ACHN (cell line): ENCODE measurements at regions of chr17 and their contacts with region 1.

Region 1: GRCh38 chr17:63819585-63820537 is 7.4 kb upstream of the PSMC5 start:
- DNase-seq: no peak

Region 2: DNA sequence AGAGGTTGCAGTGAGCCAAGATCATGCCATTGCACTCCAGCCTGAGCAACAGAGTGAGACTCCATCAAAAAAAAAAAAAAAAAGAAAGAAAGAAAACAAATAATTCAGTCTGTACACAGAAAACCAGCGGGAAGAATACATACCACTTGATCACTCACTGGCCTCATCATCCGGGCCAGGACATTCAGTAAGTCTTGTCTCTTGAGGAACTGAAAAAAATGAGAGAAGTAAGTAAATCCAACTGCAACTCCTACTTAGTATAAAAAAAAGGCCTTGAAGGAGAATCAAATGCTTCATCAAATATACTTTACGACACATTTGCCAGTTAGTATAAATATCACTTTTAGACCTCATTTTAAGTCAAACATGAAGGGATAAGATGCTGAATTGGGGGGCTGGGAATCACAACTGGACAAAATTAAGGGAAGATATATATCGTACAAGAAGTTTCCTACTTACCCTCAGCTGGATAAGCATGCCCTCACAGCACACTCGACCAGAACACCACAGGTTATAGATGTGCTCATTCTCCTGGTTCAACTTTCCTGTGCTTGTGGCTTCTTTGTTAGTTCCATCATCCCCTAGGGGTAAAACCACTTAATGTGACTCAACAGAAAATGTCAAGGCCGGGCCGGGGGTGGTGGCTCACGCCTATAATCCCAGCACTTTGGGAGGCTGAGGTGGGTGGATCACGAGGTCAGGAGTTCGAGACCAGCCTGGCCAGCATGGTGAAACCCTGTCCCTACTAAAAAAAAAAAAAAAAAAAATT is 58.9 kb before region 1 on chr17:
- in situ Hi-C with region 1: loop called (anchors 10 kb)
- DNase-seq: no peak